ENCODE measurements at regions of chr16 and their contacts with region 1.

Region 1: DNA sequence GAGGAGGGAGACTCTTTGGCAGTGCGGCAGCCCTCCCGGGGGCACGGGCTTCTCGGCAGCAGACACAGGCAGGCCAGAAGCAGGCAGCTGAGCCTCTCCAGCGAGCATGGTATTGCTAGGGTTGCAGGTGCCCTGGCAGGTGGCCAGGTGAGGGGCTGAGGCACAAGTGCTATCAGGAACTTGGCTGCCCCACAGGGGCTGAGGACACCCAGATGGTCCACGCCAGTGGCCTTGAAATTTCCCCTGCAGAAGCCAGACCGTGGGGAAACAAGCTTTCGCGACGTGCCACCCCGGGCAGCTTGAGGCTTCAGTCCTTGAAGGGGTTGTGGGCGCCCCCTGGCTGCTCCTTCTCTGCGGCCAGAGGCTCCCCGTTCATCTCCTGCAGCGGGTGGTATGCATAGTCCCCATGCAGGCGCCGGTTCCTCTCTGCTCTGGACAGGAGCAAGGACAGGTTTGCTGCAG is 8.5 kb downstream of the NAGPA start:
- DNase-seq: peak in 2 of 5 donors; percentile 31 to 61
- ATAC-seq: peak in 3 of 4 donors; percentile 39 to 64 (median 58)
- H3K4me3 ChIP-seq: no peak overlapping the region
- H3K27ac ChIP-seq: no peak overlapping the region
- H3K4me1 ChIP-seq: peaks cover 0 to 9% (median 0%) of the 10 kb centered on the region in 12 donors
- H3K27me3 ChIP-seq: no peaks in the 10 kb centered on the region
- CTCF ChIP-seq: peak in 9 of 12 donors; percentile 7 to 56 (median 25)
- POLR2A ChIP-seq: no peak

Region 2: GRCh38 chr16:4859900-4860255 is 165.3 kb before region 1 on chr16:
- intact Hi-C with region 1: loop called in 2 of 10 experiments (anchors 10 kb)
- DNase-seq: peak in 1 of 5 donors; percentile 40
- ATAC-seq: peak; percentile 34 to 76 (median 68)
- H3K4me3 ChIP-seq: no peak overlapping the region
- H3K27ac ChIP-seq: peak overlapping the region in 9 of 12 donors; percentile 5 to 57 (median 25)
- H3K4me1 ChIP-seq: peaks cover 0 to 45% (median 15%) of the 10 kb centered on the region in 12 donors
- H3K27me3 ChIP-seq: no peaks in the 10 kb centered on the region
- CTCF ChIP-seq: no peak
- POLR2A ChIP-seq: no peak

Region 3: GRCh38 chr16:4968879-4969456 is 56.2 kb before region 1 on chr16:
- intact Hi-C with region 1: loop called in 1 of 10 experiments (anchors 10 kb)
- DNase-seq: no peak
- ATAC-seq: no peak
- H3K4me3 ChIP-seq: no peak overlapping the region
- H3K27ac ChIP-seq: peak overlapping the region in 2 of 12 donors; percentile 20 to 42
- H3K4me1 ChIP-seq: peaks cover 0 to 6% (median 0%) of the 10 kb centered on the region in 12 donors
- H3K27me3 ChIP-seq: peaks cover 0 to 5% (median 0%) of the 10 kb centered on the region in 9 donors
- CTCF ChIP-seq: no peak
- POLR2A ChIP-seq: no peak

Region 4: GRCh38 chr16:4982056-4982867 is 42.9 kb before region 1 on chr16:
- intact Hi-C with region 1: no loop called
- DNase-seq: peak in 4 of 5 donors; percentile 69 to 82 (median 76)
- ATAC-seq: peak; percentile 96 to 98 (median 96)
- H3K4me3 ChIP-seq: peak overlapping the region in 7 of 12 donors; percentile 17 to 41 (median 22)
- H3K27ac ChIP-seq: peak overlapping the region; percentile 4 to 96 (median 82)
- H3K4me1 ChIP-seq: peaks cover 0 to 14% (median 1%) of the 10 kb centered on the region in 12 donors
- H3K27me3 ChIP-seq: peaks cover 0 to 8% (median 0%) of the 10 kb centered on the region in 9 donors
- CTCF ChIP-seq: no peak
- POLR2A ChIP-seq: no peak